ENCODE measurements at regions of chr9 and their contacts with region 1.

Region 1: DNA sequence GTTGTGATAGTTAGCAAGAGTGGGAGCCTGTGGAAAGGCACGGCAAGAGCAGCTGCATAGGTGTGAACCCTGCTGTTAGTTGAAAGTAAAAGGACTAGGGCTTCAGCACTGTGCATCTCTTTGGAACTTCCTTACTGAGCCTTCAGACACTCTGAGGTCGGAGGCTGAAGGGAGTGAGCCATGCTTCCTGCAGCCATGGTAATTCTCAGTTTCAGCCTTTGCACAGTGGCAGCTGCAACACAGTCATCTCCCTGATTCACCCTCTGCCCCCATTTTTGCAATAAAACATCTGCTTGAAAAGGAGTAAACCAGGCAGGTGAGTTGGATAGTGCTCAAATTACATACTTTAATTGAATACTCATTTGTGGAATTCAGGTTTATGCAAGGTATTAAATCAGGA is 6.5 kb upstream of the TLE4 start:
- DNase-seq: no peak
- H3K4me3 ChIP-seq: no peak overlapping the region
- H3K27ac ChIP-seq: no peak overlapping the region
- H3K4me1 ChIP-seq: no peaks in the 10 kb centered on the region
- H3K27me3 ChIP-seq: peaks cover 3% of the 10 kb centered on the region
- CTCF ChIP-seq: no peak

Region 2: GRCh38 chr9:79129865-79130480 is 435.3 kb before region 1 on chr9:
- intact Hi-C with region 1: loop called (anchors 10 kb)
- DNase-seq: peak; percentile 33
- H3K4me3 ChIP-seq: no peak overlapping the region
- H3K27ac ChIP-seq: no peak overlapping the region
- H3K4me1 ChIP-seq: no peaks in the 10 kb centered on the region
- H3K27me3 ChIP-seq: no peaks in the 10 kb centered on the region
- CTCF ChIP-seq: peak; percentile 68

Region 3: GRCh38 chr9:79237861-79238260 is 327.4 kb before region 1 on chr9:
- intact Hi-C with region 1: no loop called
- DNase-seq: no peak
- H3K4me3 ChIP-seq: no peak overlapping the region
- H3K27ac ChIP-seq: no peak overlapping the region
- H3K4me1 ChIP-seq: no peaks in the 10 kb centered on the region
- H3K27me3 ChIP-seq: no peaks in the 10 kb centered on the region
- CTCF ChIP-seq: no peak

Region 4: GRCh38 chr9:79489247-79489985 is 75.8 kb before region 1 on chr9:
- intact Hi-C with region 1: loop called (anchors 10 kb)
- DNase-seq: peak; percentile 21
- H3K4me3 ChIP-seq: no peak overlapping the region
- H3K27ac ChIP-seq: no peak overlapping the region
- H3K4me1 ChIP-seq: no peaks in the 10 kb centered on the region
- H3K27me3 ChIP-seq: no peaks in the 10 kb centered on the region
- CTCF ChIP-seq: no peak

Region 5: GRCh38 chr9:79501566-79501965 is 63.7 kb before region 1 on chr9:
- intact Hi-C with region 1: no loop called
- DNase-seq: no peak
- H3K4me3 ChIP-seq: no peak overlapping the region
- H3K27ac ChIP-seq: no peak overlapping the region
- H3K4me1 ChIP-seq: no peaks in the 10 kb centered on the region
- H3K27me3 ChIP-seq: no peaks in the 10 kb centered on the region
- CTCF ChIP-seq: no peak